H1 (cell line): ENCODE measurements at regions of chr17 and their contacts with region 1.

Region 1: DNA sequence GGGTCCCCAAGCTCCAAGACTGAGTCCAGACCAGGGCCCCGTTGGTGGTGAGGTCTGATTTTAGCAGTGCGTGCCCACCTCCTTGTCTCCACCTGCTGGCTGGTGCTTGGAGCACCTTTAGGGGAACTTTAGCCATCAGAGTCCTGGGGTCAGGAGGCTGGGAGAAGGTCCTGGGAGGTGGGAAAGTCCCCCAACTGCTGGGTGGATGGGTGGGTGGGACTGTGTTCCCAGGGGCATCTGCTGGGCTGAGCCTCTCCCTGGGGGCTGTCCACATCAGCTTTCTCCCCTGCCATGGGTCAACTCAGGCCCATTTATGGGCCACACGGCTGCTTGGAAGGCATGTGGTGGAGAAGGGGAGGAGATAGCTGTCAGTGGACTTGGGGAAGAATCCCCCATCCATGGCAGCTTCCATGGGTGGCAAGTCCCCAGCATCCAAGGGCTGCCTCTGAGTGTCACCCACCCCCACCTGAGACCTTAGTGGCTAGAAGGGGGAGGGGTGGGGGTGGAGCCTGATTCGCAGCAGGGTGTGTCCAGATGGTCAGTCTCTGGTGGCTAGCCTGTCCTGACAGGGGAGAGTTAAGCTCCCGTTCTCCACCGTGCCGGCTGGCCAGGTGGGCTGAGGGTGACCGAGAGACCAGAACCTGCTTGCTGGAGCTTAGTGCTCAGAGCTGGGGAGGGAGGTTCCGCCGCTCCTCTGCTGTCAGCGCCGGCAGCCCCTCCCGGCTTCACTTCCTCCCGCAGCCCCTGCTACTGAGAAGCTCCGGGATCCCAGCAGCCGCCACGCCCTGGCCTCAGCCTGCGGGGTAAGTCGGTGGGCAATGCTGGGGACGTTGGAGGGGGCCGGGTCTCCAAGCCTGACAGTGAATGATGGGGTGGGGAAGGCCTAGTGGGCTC is at the start of gene TRPV2:
- DNase-seq: peak in 1 of 2 experiments; percentile 73
- H3K4me3 ChIP-seq: no peak within 1 kb of the TSS
- H3K27ac ChIP-seq: no peak within 1 kb of the TSS
- H3K4me1 ChIP-seq: peaks cover 0 to 12% (median 5%) of the 10 kb centered on the region in 4 experiments; a peak in 6 of 7 replicates
- H3K27me3 ChIP-seq: no peaks in the 10 kb centered on the region
- CTCF ChIP-seq: peak; percentile 81 to 84 (median 82)
- EP300 ChIP-seq: no peak
- POLR2A ChIP-seq: no peak
- RAD21 ChIP-seq: peak; percentile 68 to 75
- total RNA-seq, gene TRPV2: 1.6 and 2.1 TPM in 2 replicates

Region 2: DNA sequence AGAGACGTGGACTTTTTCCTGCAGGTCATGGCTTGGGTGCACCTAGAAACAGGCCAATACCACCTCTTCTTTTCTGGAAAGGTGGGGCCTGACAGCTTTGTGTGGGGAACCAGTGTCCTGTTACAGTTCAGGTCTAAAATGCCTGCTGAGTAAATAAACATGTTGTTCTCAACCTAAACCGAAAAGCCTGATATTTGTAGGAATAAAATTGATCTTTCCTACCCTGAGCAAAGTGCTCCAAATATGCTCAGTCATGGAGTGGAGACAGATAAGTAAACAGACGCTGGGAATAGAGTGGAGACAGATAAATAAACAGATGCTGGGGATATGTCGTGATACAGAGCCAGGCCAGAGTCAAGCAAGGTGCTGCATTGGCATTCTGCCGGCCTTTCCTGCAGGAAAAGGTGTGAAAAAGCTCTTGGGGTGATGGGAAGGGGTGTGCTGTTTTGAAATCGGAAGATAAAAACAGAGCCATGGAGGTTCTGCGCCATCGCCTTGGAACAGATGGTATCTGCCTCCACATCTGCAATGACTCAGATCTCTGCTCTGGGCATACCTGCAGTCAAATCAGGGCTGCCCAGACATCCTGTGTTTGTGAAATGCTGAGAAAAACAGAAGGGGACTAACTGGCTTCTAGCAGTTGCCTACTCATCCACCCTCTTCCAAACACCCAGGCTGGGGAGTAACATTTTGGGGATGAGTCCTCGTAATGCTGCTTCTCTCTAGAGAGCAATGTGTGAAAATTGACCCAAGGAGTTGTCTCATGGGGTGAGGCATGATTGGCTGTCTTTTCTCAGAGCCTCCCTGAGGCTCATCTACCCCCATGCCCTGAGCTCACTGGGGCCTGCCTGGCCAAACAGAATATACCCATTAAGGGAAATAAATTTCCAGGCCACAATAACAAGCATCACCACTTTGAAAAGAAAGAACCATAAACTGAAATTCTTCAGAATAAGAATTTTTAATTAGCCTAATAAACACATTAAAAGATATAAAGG is 16.7 kb before region 1 on chr17:
- CTCF ChIA-PET with region 1: interaction called, 17 read pairs
- POLR2A ChIA-PET with region 1: no interaction called
- DNase-seq: no peak
- H3K4me3 ChIP-seq: no peak overlapping the region
- H3K27ac ChIP-seq: no peak overlapping the region; the same call in 1 of the 2 replicates
- H3K4me1 ChIP-seq: peaks cover 0 to 4% (median 3%) of the 10 kb centered on the region in 4 experiments; a peak in 3 of 7 replicates
- H3K27me3 ChIP-seq: no peaks in the 10 kb centered on the region
- CTCF ChIP-seq: no peak
- EP300 ChIP-seq: no peak
- POLR2A ChIP-seq: no peak
- RAD21 ChIP-seq: no peak

Region 3: DNA sequence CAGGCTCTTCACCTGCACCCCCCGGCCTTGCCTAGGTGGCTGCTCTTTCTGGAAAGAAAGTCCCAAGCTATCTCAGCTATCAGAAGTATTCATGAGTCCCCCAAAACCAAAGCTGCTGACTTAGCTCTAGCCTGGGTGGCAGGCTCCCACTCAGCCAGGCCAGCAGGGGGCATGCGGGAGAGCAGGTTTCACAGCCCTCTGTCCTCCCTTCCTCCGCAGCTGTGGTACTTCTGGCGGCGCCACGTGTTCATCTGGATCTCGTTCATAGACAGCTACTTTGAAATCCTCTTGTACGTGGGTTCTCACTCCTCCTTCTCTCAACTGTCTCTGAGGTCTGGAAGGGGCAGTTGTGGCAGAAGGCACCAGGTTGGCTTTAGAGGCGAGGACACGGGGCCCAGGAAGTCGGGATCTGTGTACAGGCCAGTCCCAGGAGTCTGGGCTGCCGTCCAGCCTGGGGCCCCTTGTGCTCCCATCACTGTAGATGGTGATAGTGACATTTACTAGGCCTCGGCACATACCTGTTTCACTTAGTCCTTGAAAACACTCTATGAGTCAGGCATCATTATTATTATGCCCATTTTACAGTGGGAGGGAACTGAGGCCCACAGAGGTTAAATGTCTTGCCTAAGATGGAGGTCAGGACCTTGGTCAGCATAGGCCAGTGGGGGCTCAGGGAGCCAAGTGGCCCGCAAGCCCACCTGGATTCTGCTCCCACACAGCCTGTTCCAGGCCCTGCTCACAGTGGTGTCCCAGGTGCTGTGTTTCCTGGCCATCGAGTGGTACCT is 13.0 kb after region 1 on chr17:
- CTCF ChIA-PET with region 1: interaction called, 53 read pairs
- POLR2A ChIA-PET with region 1: interaction called, 5 read pairs
- DNase-seq: peak in 1 of 2 experiments; percentile 44
- H3K4me3 ChIP-seq: no peak overlapping the region
- H3K27ac ChIP-seq: no peak overlapping the region
- H3K4me1 ChIP-seq: no peaks in the 10 kb centered on the region
- H3K27me3 ChIP-seq: no peaks in the 10 kb centered on the region; a peak in 1 of 7 replicates
- CTCF ChIP-seq: peak; percentile 62 to 82 (median 81)
- EP300 ChIP-seq: no peak
- POLR2A ChIP-seq: no peak
- RAD21 ChIP-seq: peak; percentile 40 to 52